ENCODE measurements at regions of chr21 and their contacts with region 1.

Region 1: GRCh38 chr21:32727687-32728455 is at the start of gene SYNJ1:
- DNase-seq: peak; percentile 98
- H3K4me3 ChIP-seq: peak within 1 kb of the TSS; percentile 89 to 98 (median 94)
- H3K27ac ChIP-seq: peak within 1 kb of the TSS; percentile 88 to 97 (median 96)
- H3K4me1 ChIP-seq: peaks cover 12 to 25% (median 21%) of the 10 kb centered on the region in 4 donors
- H3K27me3 ChIP-seq: no peaks in the 10 kb centered on the region
- CTCF ChIP-seq: no peak
- EP300 ChIP-seq: no peak
- POLR2A ChIP-seq: peak; percentile 68
- total RNA-seq, gene SYNJ1: 8.1 to 9.4 (median 8.5) TPM

Region 2: GRCh38 chr21:32612075-32612998 is 115.5 kb before region 1 on chr21 and contains the start of gene CFAP298:
- intact Hi-C with region 1: loop called (anchors 5 kb)
- DNase-seq: peak; percentile 97
- H3K4me3 ChIP-seq: peak within 1 kb of the TSS; percentile 74 to 98 (median 86)
- H3K27ac ChIP-seq: peak within 1 kb of the TSS; percentile 86 to 92 (median 90)
- H3K4me1 ChIP-seq: peaks cover 8 to 29% (median 22%) of the 10 kb centered on the region in 4 donors
- H3K27me3 ChIP-seq: peaks cover 0 to 4% (median 0%) of the 10 kb centered on the region in 4 donors
- CTCF ChIP-seq: no peak
- EP300 ChIP-seq: no peak
- POLR2A ChIP-seq: no peak
- total RNA-seq, gene CFAP298: 22.8 to 41.2 (median 32.8) TPM

Region 3: DNA sequence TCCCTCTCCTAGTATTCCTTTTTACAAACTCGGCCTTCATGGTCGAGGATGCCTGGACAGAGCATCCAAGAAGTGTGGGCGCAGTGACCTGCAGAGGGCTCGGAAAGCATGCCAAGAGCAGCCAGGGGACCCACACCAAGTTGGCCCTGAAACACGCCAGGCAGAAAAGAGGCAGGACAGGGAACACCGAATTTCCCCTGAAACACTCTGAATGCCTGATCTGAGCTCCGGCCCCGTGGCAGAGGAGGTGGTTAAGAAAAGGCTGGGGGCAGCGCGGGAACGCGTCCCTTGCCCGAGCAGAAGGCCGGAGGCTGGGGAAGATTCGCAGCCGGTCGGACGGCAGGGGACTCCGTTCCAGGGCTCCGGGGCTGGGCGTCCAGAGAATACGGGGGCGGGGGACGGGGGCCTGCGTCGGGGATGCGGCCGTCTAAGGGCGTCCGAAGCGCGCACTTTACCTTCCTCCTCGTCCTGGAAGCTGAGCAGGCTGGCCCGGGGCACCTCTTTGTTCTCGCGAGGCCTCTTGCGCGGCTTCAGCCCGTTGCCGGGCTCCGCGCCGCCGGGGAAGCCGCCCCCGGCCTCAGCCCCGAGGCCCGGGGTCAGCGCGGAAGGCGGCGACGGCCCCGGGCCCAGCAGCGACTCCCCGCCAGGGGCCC is 43.1 kb after region 1 on chr21:
- intact Hi-C with region 1: loop called (anchors 5 kb)
- DNase-seq: no peak
- H3K4me3 ChIP-seq: peak overlapping the region; percentile 66 to 87 (median 84)
- H3K27ac ChIP-seq: peak overlapping the region; percentile 84 to 96 (median 92)
- H3K4me1 ChIP-seq: peaks cover 28 to 56% (median 52%) of the 10 kb centered on the region in 4 donors
- H3K27me3 ChIP-seq: peaks cover 0 to 5% (median 0%) of the 10 kb centered on the region in 4 donors
- CTCF ChIP-seq: no peak
- EP300 ChIP-seq: no peak
- POLR2A ChIP-seq: no peak

Region 4: GRCh38 chr21:32803651-32804050 is 75.8 kb after region 1 on chr21:
- intact Hi-C with region 1: no loop called
- DNase-seq: peak; percentile 31
- H3K4me3 ChIP-seq: no peak overlapping the region
- H3K27ac ChIP-seq: no peak overlapping the region
- H3K4me1 ChIP-seq: peaks cover 0 to 54% (median 53%) of the 10 kb centered on the region in 4 donors
- H3K27me3 ChIP-seq: no peaks in the 10 kb centered on the region
- CTCF ChIP-seq: no peak
- EP300 ChIP-seq: no peak
- POLR2A ChIP-seq: no peak

Measured in esophagus muscularis mucosa (tissue), 4 donors.